HEK293 (cell line): ENCODE measurements at regions of chr18 and their contacts with region 1.

Region 1: GRCh38 chr18:3869848-3870247 is 419.9 kb downstream of the TGIF1 start:
- H3K4me3 ChIP-seq: no peak overlapping the region
- H3K27ac ChIP-seq: no peak overlapping the region
- H3K4me1 ChIP-seq: peaks cover 6% of the 10 kb centered on the region
- CTCF ChIP-seq: 0 out of 2 replicates have a peak, but pooled peaks have one; percentile 19

Region 2: DNA sequence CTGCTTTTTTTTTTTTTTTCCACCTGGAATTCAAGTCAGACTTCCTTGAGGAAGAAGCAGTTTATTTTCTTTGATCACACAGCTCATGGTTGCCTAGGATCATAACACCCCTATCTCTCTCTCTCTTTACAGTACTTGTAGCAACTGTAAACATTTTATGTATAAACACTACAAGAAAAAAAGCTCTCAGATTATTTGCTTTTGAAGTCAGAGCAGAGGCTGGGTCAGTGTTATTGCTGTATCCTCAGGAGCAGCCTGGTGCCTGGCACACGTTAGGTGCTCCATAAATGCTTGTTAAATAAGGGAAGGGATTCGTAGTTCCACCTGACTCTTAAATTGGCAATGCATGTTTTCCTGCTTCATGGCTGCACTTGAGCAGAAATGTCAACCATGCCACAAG is 198.7 kb before region 1 on chr18:
- CTCF ChIA-PET with region 1: interaction called, 38 read pairs
- POLR2A ChIA-PET with region 1: no interaction called
- H3K4me3 ChIP-seq: no peak overlapping the region
- H3K27ac ChIP-seq: no peak overlapping the region
- H3K4me1 ChIP-seq: peaks cover 8% of the 10 kb centered on the region; the same call in 1 of the 2 replicates
- CTCF ChIP-seq: no peak

Region 3: DNA sequence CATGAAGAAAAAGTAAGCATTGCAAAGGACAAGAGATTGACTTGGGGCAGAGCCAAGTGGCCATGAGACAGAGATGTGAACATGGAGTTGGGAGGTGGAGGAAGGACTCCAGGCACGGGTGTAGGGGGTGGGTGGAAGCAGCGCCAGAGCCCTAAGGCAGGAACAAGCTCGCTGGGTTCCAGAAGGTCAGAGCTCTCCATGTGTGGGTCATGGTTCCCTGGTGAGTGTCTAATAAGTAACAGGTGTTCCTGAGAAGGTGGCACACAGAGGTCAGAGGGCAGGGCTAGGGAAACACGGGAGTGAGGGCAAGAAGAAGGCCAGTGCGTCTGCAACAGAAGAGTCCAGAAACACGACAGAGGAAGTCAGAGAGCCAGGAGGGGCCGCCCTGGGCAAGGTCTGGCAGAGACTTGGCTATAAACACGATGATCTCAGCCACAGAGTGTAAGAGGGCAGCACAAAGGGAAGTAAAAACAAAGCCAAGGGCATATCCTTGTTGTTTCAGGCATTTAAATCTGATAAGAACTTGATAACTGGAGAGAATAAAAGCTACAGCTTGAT is 159.1 kb before region 1 on chr18:
- CTCF ChIA-PET with region 1: interaction called, 43 read pairs
- POLR2A ChIA-PET with region 1: no interaction called
- H3K4me3 ChIP-seq: no peak overlapping the region
- H3K27ac ChIP-seq: 0 out of 2 replicates have a peak overlapping the region, but pooled peaks have one; percentile 24
- H3K4me1 ChIP-seq: peaks cover 8% of the 10 kb centered on the region
- CTCF ChIP-seq: 0 out of 2 replicates have a peak, but pooled peaks have one; percentile 7

Region 4: DNA sequence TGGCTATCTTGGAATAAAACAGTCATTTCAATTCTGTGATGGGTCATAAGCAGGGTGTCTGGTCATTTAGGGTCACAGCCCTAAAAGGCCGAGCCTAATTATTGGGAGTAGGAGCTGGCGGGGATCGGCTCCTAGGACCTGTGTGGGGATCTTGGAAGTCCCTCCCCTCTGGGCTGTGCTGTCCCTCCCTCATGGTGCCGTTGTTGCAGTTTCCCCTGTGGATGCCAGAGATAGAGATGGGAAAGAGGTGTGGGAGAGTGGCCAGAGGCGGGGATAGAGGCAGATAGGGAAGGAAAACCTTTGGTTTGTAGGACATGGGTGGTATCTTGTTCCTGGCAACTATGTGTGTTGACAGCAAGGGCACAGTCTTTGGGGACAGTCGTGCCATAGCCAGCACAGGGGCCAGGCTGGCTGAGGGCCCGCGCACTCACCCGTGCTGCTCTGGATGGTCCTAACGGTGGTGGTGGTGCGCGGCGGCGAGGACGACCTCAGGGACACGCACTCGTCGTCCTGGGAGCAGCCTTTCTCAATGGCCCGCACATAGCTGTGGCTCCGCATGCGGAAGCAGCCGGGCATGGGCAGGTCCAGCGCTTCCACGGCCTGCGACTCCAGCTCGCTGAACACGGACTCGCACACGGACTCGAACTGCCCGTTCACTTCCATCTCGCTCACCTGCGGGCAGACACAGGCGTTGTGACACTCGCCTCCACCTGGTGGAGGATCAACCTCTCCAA is 141.0 kb before region 1 on chr18:
- CTCF ChIA-PET with region 1: no interaction called
- POLR2A ChIA-PET with region 1: no interaction called
- H3K4me3 ChIP-seq: no peak overlapping the region
- H3K27ac ChIP-seq: no peak overlapping the region
- H3K4me1 ChIP-seq: 0 out of 2 replicates have a peak, but pooled peaks cover 3% of the 10 kb centered on the region
- CTCF ChIP-seq: no peak

Region 5: GRCh38 chr18:3857544-3857943 is 12.3 kb before region 1 on chr18:
- CTCF ChIA-PET with region 1: interaction called, 14 read pairs
- POLR2A ChIA-PET with region 1: no interaction called
- H3K4me3 ChIP-seq: no peak overlapping the region
- H3K27ac ChIP-seq: no peak overlapping the region
- H3K4me1 ChIP-seq: no peaks in the 10 kb centered on the region
- CTCF ChIP-seq: no peak

Region 6: GRCh38 chr18:3931542-3932112 is 61.8 kb after region 1 on chr18:
- CTCF ChIA-PET with region 1: no interaction called
- POLR2A ChIA-PET with region 1: no interaction called
- H3K4me3 ChIP-seq: no peak overlapping the region
- H3K27ac ChIP-seq: no peak overlapping the region
- H3K4me1 ChIP-seq: no peaks in the 10 kb centered on the region
- CTCF ChIP-seq: no peak